RWPE1 (cell line): ENCODE measurements at regions of chr14 and their contacts with region 1.

Region 1: GRCh38 chr14:64891839-64892375 is 12.2 kb upstream of the SPTB start:
- DNase-seq: peak; percentile 38
- H3K27ac ChIP-seq: no peak overlapping the region
- CTCF ChIP-seq: peak; percentile 62

Region 2: DNA sequence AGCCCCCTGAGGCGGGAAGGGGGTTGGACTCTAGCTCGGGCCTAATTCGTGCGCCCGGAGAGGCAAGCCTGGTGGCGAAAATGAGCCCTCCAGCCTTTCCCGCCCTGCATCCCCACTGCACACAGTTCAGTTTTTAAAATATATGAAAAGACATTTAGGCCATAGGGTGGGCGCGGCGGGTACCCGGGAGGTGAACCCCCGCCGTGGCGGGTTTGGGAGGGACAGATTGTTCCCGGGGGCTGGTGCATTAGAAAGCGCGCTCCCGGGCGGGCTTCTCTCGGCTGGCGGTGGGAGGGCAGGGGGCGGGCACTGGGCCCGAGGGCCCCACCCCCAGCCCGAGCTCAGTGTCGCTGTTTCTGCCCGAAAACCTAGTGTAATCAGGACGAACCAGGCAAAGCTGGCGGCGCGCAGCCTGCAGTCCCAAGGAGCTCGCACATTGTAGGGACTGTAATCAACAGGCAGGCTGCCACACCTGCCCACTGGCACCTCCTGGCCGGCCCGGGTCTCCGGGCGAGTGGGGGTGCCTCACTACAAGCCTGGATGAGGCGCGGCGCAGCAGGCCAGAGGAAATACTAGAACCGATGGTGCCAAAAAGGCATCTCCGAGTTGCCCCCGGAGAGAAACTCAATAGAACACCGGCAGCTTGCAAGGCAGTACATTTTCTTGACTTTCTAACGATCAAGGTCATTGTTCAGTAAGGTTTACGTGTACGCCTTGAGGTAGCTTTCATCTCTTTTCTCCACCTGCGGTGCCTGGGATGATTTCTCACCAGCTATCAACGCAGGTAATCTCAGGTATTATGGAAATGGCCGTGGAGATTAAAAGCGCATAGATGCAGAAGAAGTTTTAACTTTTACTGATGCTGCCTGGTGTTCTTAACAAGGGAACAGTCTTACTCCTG is 11.4 kb before region 1 on chr14:
- CTCF ChIA-PET with region 1: interaction called, 34 read pairs
- POLR2A ChIA-PET with region 1: interaction called, 3 read pairs
- DNase-seq: peak; percentile 30
- H3K27ac ChIP-seq: no peak overlapping the region
- CTCF ChIP-seq: no peak